Aorta (tissue), 5 donors: ENCODE measurements at regions of chr1 and their contacts with region 1.

Region 1: DNA sequence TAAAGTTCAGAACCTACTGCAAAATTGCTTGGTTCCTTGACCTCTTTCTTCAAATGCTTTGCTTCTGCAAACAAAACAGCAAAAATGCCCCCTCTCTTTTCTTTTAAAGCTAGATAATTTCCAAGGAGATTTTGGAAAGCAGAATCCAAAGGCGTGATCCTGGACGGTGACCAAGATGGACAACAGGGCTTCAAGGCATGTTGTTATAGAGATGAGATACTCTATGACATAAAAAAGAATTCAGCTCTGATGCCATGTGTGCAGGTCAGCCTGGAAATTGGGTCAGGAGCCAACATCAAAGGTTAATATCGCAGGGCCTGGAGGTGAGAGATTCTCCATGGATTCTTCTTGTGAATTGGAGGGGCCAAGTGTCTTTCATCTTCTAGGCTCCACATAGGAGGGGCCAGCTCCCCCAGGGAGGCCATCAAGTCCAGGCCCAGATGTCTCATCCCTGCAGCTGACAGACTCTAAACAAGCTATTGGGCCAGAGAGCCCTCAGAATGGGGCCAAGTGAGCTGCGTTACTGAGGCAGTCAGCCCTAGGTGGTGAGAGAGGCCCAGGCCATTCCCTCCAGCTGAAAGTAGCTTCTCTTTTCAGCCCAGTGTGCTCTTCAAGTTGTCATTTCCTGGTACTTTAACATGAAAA is 45.5 kb downstream of the NMNAT2 start:
- DNase-seq: no peak
- ATAC-seq: no peak
- H3K4me3 ChIP-seq: no peak overlapping the region
- H3K27ac ChIP-seq: no peak overlapping the region
- H3K4me1 ChIP-seq: no peaks in the 10 kb centered on the region
- H3K27me3 ChIP-seq: no peaks in the 10 kb centered on the region

Region 2: GRCh38 chr1:183331091-183331742 is 41.5 kb before region 1 on chr1:
- intact Hi-C with region 1: loop called in 1 of 2 experiments (anchors 2 kb)
- DNase-seq: no peak
- ATAC-seq: no peak
- H3K4me3 ChIP-seq: no peak overlapping the region
- H3K27ac ChIP-seq: no peak overlapping the region
- H3K4me1 ChIP-seq: peaks cover 0 to 3% of the 10 kb centered on the region in 2 donors
- H3K27me3 ChIP-seq: no peaks in the 10 kb centered on the region

Region 3: GRCh38 chr1:183454390-183454789 is 81.7 kb after region 1 on chr1:
- intact Hi-C with region 1: no loop called
- DNase-seq: no peak
- ATAC-seq: no peak
- H3K4me3 ChIP-seq: no peak overlapping the region
- H3K27ac ChIP-seq: no peak overlapping the region
- H3K4me1 ChIP-seq: no peaks in the 10 kb centered on the region
- H3K27me3 ChIP-seq: peaks cover 0 to 1% of the 10 kb centered on the region in 2 donors